Activated T-helper 1 cell treated with anti-CD3 and anti-CD28 coated beads, Interleukin-12 subunit alpha, Interleukin-12 subunit beta, Interleukin-2, Interleukin-4 antibody, amounts not matched to agents 30 ng/mL and 10 ng/mL and 1 ng/mL, durations not matched to agents 14 hours and 24 hours and 36 hours (primary cell): ENCODE measurements at regions of chr5 and their contacts with region 1.

Region 1: GRCh38 chr5:178551059-178551458 is 39.1 kb downstream of the COL23A1 start:
- DNase-seq: no peak
- H3K4me3 Mint-ChIP-seq: no peak overlapping the region
- H3K27ac Mint-ChIP-seq: no peak overlapping the region
- H3K4me1 Mint-ChIP-seq: no peaks in the 10 kb centered on the region
- H3K27me3 Mint-ChIP-seq: peaks cover 3% of the 10 kb centered on the region

Region 2: DNA sequence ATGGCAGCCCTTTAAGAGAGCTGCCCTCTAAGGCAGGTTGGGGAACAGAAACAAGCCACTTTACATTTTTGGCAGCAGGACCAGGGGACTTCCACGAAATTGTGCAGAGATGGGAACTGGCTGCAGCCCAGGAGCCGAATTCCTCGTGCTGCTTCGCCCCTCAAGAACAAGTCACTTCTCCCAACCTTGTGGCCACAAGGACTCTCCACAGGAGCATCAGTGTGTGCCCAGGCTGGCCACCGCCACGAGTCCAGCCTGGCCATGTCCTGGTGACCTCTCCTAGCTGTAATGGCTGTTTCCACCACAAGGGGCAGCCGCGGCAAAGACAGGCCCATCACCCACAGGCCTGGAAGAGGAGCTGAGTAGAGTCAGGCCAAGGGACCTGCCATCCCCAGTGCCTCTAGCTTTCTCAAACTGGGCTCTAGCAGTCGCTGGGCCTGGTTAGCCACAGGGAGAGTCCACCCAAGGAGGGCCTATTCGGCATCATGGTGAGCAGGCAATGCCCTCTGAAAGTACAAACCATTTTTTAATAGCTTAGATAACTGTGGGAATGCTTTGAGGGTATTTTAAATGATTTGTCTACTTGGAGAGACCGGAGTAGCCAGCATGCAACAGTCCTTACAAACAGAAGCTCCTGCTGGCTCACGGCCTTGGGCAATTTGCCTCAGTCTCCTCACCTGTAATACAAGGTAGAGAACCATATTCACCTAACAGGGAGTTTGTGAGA is 89.9 kb before region 1 on chr5:
- intact Hi-C with region 1: loop called (anchors 5 kb)
- DNase-seq: peak; percentile 11
- H3K4me3 Mint-ChIP-seq: no peak overlapping the region
- H3K27ac Mint-ChIP-seq: no peak overlapping the region
- H3K4me1 Mint-ChIP-seq: no peaks in the 10 kb centered on the region
- H3K27me3 Mint-ChIP-seq: no peaks in the 10 kb centered on the region